ENCODE measurements at regions of chr16 and their contacts with region 1.

Region 1: DNA sequence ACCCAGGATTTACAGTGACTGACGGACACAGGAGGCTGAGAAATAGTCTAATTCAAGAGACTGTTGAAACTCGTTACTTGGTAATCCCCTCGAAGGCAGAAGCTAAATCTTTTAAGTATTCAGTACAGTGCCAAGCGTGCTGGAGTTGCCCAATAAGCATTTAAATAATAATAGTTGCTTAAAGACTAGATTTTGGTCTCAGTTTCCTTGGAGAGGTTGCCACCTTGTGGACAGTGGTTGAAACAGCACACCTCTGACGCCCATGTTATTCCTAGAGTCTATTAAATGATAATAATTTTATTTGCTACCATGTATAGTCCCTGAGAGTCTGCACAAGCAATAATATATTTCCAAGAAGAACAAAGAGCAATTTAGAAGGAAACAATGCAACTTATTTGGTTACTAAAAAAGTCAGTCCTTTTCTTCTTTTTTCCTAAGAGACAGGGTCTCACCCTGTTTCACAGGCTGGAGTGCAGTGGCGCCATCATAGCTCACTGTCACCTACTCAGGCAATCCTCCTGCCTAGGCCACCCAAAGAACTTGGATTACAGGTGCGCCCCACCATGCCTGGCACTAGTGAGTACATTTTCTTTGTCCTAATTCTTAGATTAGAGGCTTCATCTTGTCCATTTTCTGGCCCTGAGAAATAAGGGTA is 138.0 kb upstream of the NUDT7 start:
- DNase-seq: peak; percentile 43 to 66
- ATAC-seq: peak; percentile 69 to 82; a peak in 4 of 6 replicates
- H3K4me3 ChIP-seq: no peak overlapping the region
- H3K27ac ChIP-seq: peak overlapping the region in 1 of 2 experiments; percentile 47; a peak in 1 of 6 replicates
- H3K4me1 ChIP-seq: peaks cover 27% of the 10 kb centered on the region; the same call in 2 of the 3 replicates
- CTCF ChIP-seq: peak; percentile 98
- EP300 ChIP-seq: no peak
- POLR2A ChIP-seq: no peak
- RAD21 ChIP-seq: peak; percentile 97 to 99

Region 2: GRCh38 chr16:77289331-77289809 is 295.0 kb before region 1 on chr16:
- CTCF ChIA-PET with region 1: interaction called, 28 read pairs
- POLR2A ChIA-PET with region 1: no interaction called
- DNase-seq: peak; percentile 20 to 88
- ATAC-seq: peak; percentile 86 to 90
- H3K4me3 ChIP-seq: no peak overlapping the region
- H3K27ac ChIP-seq: peak overlapping the region; percentile 71 to 85
- H3K4me1 ChIP-seq: peaks cover 38% of the 10 kb centered on the region
- CTCF ChIP-seq: no peak
- EP300 ChIP-seq: peak; percentile 58 to 71; a peak in 4 of 5 replicates
- POLR2A ChIP-seq: no peak
- RAD21 ChIP-seq: peak in 1 of 2 experiments; percentile 34; a peak in 2 of 5 replicates

Region 3: GRCh38 chr16:77564791-77565390 is 19.4 kb before region 1 on chr16:
- CTCF ChIA-PET with region 1: interaction called, 47 read pairs
- POLR2A ChIA-PET with region 1: no interaction called
- DNase-seq: peak in 1 of 2 experiments; percentile 14
- ATAC-seq: no peak
- H3K4me3 ChIP-seq: no peak overlapping the region
- H3K27ac ChIP-seq: no peak overlapping the region
- H3K4me1 ChIP-seq: peaks cover 4% of the 10 kb centered on the region; the same call in 1 of the 3 replicates
- CTCF ChIP-seq: no peak
- EP300 ChIP-seq: no peak
- POLR2A ChIP-seq: no peak
- RAD21 ChIP-seq: no peak

Region 4: DNA sequence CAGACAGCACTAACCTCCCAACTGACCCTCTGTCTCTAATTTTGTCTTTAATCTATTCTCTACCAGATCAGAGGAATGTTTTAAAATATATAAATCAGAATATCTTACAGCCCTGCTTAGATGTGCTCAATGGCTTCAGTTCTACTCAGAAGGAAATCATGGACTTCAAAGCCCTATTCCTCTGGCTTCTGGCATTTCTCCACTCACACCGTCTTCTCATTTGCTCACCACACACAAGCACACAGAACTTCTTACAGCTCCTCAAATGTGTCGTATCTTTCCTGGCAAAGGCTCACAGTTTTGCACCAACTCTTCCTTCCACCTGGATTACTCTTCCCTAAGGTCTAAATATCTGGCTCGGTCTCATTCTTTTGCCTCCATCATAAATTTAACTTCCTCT is 66.4 kb after region 1 on chr16:
- CTCF ChIA-PET with region 1: interaction called, 10 read pairs
- POLR2A ChIA-PET with region 1: no interaction called
- DNase-seq: no peak
- ATAC-seq: no peak
- H3K4me3 ChIP-seq: no peak overlapping the region
- H3K27ac ChIP-seq: no peak overlapping the region
- H3K4me1 ChIP-seq: no peaks in the 10 kb centered on the region
- CTCF ChIP-seq: no peak
- EP300 ChIP-seq: no peak
- POLR2A ChIP-seq: no peak
- RAD21 ChIP-seq: no peak

Region 5: GRCh38 chr16:78292903-78293347 is 708.6 kb after region 1 on chr16:
- CTCF ChIA-PET with region 1: no interaction called
- POLR2A ChIA-PET with region 1: no interaction called
- DNase-seq: no peak
- ATAC-seq: no peak
- H3K4me3 ChIP-seq: no peak overlapping the region
- H3K27ac ChIP-seq: no peak overlapping the region
- H3K4me1 ChIP-seq: peaks cover 7% of the 10 kb centered on the region; the same call in 1 of the 3 replicates
- CTCF ChIP-seq: no peak
- EP300 ChIP-seq: no peak
- POLR2A ChIP-seq: no peak
- RAD21 ChIP-seq: no peak